ENCODE measurements at regions of chr2 and their contacts with region 1.

Region 1: DNA sequence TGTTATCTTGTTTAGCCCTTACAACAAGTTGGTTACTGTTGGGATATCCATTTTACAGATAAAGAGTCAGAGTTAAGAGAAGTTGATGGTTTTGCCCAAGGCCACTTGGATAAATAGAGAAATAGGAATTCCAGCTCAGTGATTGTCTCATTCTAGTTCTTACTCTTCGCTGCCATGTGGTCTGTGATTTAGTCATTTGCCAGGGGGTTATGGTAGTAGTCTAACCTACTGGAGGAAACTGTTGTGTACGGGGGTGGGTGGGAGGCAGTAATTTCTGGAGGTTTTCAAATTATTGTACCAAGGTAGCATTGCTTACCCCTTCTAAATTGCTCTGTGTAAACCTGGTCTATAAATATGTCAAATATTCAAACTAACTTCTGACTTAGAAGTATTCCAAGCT is 110.4 kb downstream of the MAP2 start:
- DNase-seq: no peak

Region 2: GRCh38 chr2:209441541-209441940 is 92.7 kb before region 1 on chr2:
- intact Hi-C with region 1: loop called (anchors 5 kb)
- DNase-seq: no peak

Region 3: GRCh38 chr2:209495855-209496585 is 38.2 kb before region 1 on chr2:
- intact Hi-C with region 1: loop called (anchors 5 kb)
- DNase-seq: no peak

Region 4: GRCh38 chr2:210195101-210195852 is 661.0 kb after region 1 on chr2:
- intact Hi-C with region 1: no loop called
- DNase-seq: no peak

Measured in cardiac septum (tissue), 1 donor.